Activated B cell treated with CpG ODN at 0.5 μM for 24 hours (primary cell): ENCODE measurements at regions of chr19 and their contacts with region 1.

Region 1: GRCh38 chr19:14006243-14006765 is at the start of gene RFX1:
- DNase-seq: peak; percentile 100
- ATAC-seq: peak; percentile 74
- H3K4me3 Mint-ChIP-seq: peak within 1 kb of the TSS; percentile 94
- H3K27ac Mint-ChIP-seq: peak within 1 kb of the TSS; percentile 98
- H3K4me1 Mint-ChIP-seq: peaks cover 48% of the 10 kb centered on the region
- H3K27me3 Mint-ChIP-seq: no peaks in the 10 kb centered on the region
- CTCF ChIP-seq: no peak
- total RNA-seq, gene RFX1: 19.0 and 19.9 TPM in 2 replicates

Region 2: DNA sequence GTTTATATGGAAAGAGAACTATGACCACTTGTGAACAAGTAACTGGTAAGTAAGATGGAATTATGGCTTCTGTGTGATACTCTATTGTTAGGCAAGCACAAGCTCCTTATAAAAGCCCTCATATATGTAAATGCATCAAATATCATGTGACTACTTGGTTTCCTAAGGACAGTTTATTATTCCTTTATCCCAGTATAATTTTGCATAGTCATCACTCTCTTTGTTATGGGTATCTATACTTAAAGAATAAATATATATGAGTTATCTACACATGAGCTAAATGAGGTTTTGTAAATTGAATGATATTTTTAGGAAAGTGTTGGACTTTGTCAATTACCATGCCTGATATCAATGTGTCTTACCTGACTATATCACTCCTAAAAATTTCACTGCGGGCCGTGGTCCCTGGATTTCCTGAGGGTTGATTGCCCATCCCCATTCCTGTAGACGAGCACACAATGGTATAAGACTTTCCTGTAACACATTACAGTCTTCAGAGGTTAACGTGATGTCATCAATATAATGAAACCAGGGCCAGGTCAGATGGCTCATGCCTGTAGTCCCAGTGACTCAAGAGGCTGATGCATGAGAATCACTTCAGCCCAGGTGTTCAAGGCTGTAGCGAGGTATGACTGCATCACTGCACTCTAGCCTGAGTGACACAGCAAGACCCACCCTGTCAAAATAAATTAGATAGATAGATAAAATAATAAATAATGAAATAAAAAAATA is 1921.1 kb before region 1 on chr19:
- CTCF ChIA-PET with region 1: no interaction called
- POLR2A ChIA-PET with region 1: no interaction called
- intact Hi-C with region 1: no loop called
- DNase-seq: no peak
- ATAC-seq: no peak
- H3K4me3 Mint-ChIP-seq: no peak overlapping the region
- H3K27ac Mint-ChIP-seq: no peak overlapping the region
- H3K4me1 Mint-ChIP-seq: no peaks in the 10 kb centered on the region
- H3K27me3 Mint-ChIP-seq: no peaks in the 10 kb centered on the region
- CTCF ChIP-seq: no peak

Region 3: DNA sequence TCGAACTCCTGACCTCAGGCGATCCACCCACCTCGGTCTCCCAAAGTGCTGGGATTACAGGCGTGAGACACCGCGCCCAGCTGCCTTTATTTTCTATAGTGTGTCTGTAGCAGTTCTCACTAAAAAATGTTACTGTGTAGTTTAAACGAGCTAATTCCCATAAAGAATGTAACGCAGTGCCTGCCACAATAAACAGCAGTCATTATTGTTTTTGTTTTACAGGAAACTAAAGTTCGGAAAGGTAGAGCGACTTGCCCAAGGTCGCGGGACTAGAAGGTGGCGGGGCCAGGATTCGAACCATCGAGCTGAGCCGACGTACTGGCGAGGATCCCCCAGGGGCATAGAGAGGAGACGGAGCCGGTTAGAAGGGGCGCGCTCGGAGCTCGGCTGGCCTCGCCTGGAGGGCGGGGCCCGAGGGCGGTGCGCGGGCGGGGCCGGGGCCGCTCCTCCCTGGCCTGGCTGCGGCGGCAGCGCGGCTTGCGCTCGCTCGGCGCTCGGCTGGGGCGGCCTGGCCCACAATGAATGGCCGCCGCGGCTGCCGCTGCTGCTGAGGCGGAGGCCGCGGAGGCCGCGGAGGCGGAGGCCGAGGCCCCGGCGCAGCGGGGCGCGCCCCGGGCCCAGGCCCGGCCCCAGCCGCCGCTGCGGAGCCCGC is 888.4 kb before region 1 on chr19 and contains the start of gene NACC1:
- CTCF ChIA-PET with region 1: no interaction called
- POLR2A ChIA-PET with region 1: interaction called, 3 read pairs
- intact Hi-C with region 1: loop called (anchors 5 kb)
- DNase-seq: peak; percentile 94
- ATAC-seq: peak; percentile 81
- H3K4me3 Mint-ChIP-seq: peak within 1 kb of the TSS; percentile 99
- H3K27ac Mint-ChIP-seq: peak within 1 kb of the TSS; percentile 96
- H3K4me1 Mint-ChIP-seq: peaks cover 64% of the 10 kb centered on the region
- H3K27me3 Mint-ChIP-seq: no peaks in the 10 kb centered on the region
- CTCF ChIP-seq: no peak
- total RNA-seq, gene NACC1: 62.1 and 68.8 TPM in 2 replicates

Region 4: GRCh38 chr19:13597640-13598039 is 408.7 kb before region 1 on chr19:
- CTCF ChIA-PET with region 1: no interaction called
- POLR2A ChIA-PET with region 1: no interaction called
- intact Hi-C with region 1: no loop called
- DNase-seq: no peak
- ATAC-seq: peak; percentile 95
- H3K4me3 Mint-ChIP-seq: no peak overlapping the region
- H3K27ac Mint-ChIP-seq: no peak overlapping the region
- H3K4me1 Mint-ChIP-seq: peaks cover 5% of the 10 kb centered on the region
- H3K27me3 Mint-ChIP-seq: peaks cover 11% of the 10 kb centered on the region
- CTCF ChIP-seq: no peak

Region 5: GRCh38 chr19:13905938-13906904 is 100.1 kb before region 1 on chr19 and contains the starts of genes BRME1 and CC2D1A:
- CTCF ChIA-PET with region 1: no interaction called
- POLR2A ChIA-PET with region 1: no interaction called
- intact Hi-C with region 1: loop called (anchors 1 kb)
- DNase-seq: peak; percentile 93
- ATAC-seq: peak; percentile 99
- H3K4me3 Mint-ChIP-seq: peak within 1 kb of the TSS; percentile 87
- H3K27ac Mint-ChIP-seq: peak within 1 kb of the TSS; percentile 78
- H3K4me1 Mint-ChIP-seq: peaks cover 11% of the 10 kb centered on the region
- H3K27me3 Mint-ChIP-seq: no peaks in the 10 kb centered on the region
- CTCF ChIP-seq: no peak
- total RNA-seq, gene BRME1: 1.2 and 2.0 TPM in 2 replicates
- total RNA-seq, gene CC2D1A: 32.4 and 35.6 TPM in 2 replicates

Region 6: GRCh38 chr19:13978347-13978733 is 28.0 kb before region 1 on chr19:
- CTCF ChIA-PET with region 1: interaction called, 4 read pairs
- POLR2A ChIA-PET with region 1: interaction called, 29 read pairs
- intact Hi-C with region 1: no loop called
- DNase-seq: no peak
- ATAC-seq: peak; percentile 36
- H3K4me3 Mint-ChIP-seq: peak overlapping the region; percentile 50
- H3K27ac Mint-ChIP-seq: no peak overlapping the region
- H3K4me1 Mint-ChIP-seq: peaks cover 42% of the 10 kb centered on the region
- H3K27me3 Mint-ChIP-seq: no peaks in the 10 kb centered on the region
- CTCF ChIP-seq: no peak

Region 7: GRCh38 chr19:14031719-14032480 is 25.6 kb after region 1 on chr19 and contains the start of gene IL27RA:
- CTCF ChIA-PET with region 1: interaction called, 8 read pairs
- POLR2A ChIA-PET with region 1: interaction called, 42 read pairs
- intact Hi-C with region 1: loop called (anchors 1 kb)
- DNase-seq: peak; percentile 70
- ATAC-seq: peak; percentile 74
- H3K4me3 Mint-ChIP-seq: peak within 1 kb of the TSS; percentile 91
- H3K27ac Mint-ChIP-seq: peak within 1 kb of the TSS; percentile 89
- H3K4me1 Mint-ChIP-seq: peaks cover 34% of the 10 kb centered on the region
- H3K27me3 Mint-ChIP-seq: no peaks in the 10 kb centered on the region
- CTCF ChIP-seq: no peak
- total RNA-seq, gene IL27RA: 34.5 and 34.6 TPM in 2 replicates

Region 8: DNA sequence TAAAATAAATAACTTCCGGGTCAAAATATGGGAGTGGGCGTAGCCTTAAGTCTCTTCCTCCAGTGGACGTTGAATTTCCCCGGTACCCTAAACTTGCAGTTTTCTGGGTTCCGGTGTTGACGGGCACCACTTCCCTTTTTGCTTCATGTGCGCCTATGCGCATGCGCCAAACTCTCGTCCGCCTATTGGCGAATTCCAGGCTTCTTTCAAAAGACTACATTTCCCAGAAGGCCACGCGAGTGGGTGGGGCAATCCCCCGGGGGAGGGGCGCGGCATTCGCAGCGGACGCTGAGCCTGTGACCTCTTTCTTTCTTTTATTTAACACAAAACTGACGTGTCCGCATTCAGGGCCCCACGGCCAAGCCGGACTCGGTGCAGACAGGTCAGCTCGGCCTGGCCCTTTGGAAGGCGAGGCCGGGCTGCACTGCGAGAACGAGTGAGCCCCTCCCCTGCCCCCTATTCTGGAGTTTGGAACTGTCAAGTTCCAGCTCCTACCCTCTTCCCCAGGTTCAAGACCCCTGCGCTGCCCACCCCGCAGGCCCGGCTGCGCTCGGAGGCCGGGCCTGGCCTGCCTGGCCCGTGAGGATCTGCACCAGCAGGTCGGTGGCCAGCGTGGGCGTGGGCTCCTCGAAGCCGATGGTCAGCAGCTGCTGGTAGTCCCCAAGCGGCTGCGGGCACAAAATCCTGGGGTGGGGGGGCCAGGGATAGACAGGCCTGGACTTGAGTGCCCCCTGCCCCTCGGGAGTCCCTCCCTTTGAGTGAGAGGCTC is 75.2 kb after region 1 on chr19:
- CTCF ChIA-PET with region 1: no interaction called
- POLR2A ChIA-PET with region 1: interaction called, 4 read pairs
- intact Hi-C with region 1: loop called (anchors 1 kb)
- DNase-seq: peak; percentile 98
- ATAC-seq: peak; percentile 91
- H3K4me3 Mint-ChIP-seq: peak overlapping the region; percentile 94
- H3K27ac Mint-ChIP-seq: peak overlapping the region; percentile 95
- H3K4me1 Mint-ChIP-seq: peaks cover 17% of the 10 kb centered on the region
- H3K27me3 Mint-ChIP-seq: no peaks in the 10 kb centered on the region
- CTCF ChIP-seq: no peak

Region 9: GRCh38 chr19:14419106-14419813 is 413.0 kb after region 1 on chr19 and contains the start of gene DDX39A:
- CTCF ChIA-PET with region 1: no interaction called
- POLR2A ChIA-PET with region 1: no interaction called
- intact Hi-C with region 1: loop called (anchors 5 kb)
- DNase-seq: peak; percentile 83
- ATAC-seq: peak; percentile 91
- H3K4me3 Mint-ChIP-seq: peak within 1 kb of the TSS; percentile 99
- H3K27ac Mint-ChIP-seq: peak within 1 kb of the TSS; percentile 99
- H3K4me1 Mint-ChIP-seq: peaks cover 44% of the 10 kb centered on the region
- H3K27me3 Mint-ChIP-seq: no peaks in the 10 kb centered on the region
- CTCF ChIP-seq: no peak
- total RNA-seq, gene DDX39A: 210 and 211 TPM in 2 replicates